Activated naive CD4-positive, alpha-beta T cell treated with anti-CD3 and anti-CD28 coated beads for 36 hours (primary cell): ENCODE measurements at regions of chr20 and their contacts with region 1.

Region 1: GRCh38 chr20:19767061-19767460 is 9.0 kb downstream of the RIN2 start:
- DNase-seq: no peak
- H3K4me3 Mint-ChIP-seq: no peak overlapping the region
- H3K27ac Mint-ChIP-seq: no peak overlapping the region
- H3K4me1 Mint-ChIP-seq: no peaks in the 10 kb centered on the region
- H3K27me3 Mint-ChIP-seq: peaks cover 5% of the 10 kb centered on the region

Region 2: DNA sequence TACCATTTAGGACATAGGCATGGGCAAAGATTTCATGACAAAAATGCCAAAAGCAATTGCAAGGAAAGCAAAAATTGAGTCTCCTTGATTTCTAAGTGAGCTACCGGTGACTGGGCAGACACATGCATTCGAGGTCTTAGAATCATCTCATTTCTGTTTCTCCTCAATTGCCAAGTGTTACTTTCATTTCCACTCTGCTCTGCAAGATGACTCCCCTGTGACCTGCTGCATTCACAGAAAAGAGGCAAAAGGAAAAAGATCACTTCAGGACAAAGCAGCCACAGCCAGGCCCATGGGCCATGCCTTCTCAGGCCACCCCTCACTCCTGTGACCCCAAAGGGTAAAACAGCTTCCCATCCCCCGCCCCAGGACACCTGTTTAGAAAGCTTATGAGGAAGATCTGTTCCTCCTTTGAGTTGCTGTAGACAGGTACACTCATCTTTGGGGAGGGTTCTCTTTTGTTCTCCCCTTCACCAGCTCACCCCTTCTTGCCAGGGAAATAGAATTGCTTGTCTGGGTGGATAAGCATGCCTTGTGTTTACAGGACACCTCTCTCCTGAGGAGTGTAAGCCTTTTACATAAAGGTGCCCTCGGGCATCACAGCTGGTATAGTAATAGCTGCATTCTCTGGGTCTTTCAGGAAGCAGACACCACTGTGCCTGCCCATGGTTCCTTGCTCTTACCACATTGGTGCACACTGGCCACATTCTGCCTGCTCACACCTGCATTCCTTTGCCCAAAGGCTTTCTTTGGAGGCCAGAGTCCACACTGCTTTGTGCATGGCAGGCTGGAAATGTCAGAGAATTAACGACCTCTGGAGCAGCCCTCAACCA is 449.6 kb before region 1 on chr20:
- CTCF ChIA-PET with region 1: no interaction called
- intact Hi-C with region 1: loop called (anchors 5 kb)
- DNase-seq: no peak
- H3K4me3 Mint-ChIP-seq: no peak overlapping the region
- H3K27ac Mint-ChIP-seq: no peak overlapping the region
- H3K4me1 Mint-ChIP-seq: no peaks in the 10 kb centered on the region
- H3K27me3 Mint-ChIP-seq: peaks cover 4% of the 10 kb centered on the region